ENCODE measurements at regions of chr1 and their contacts with region 1.

Region 1: GRCh38 chr1:67149179-67149770 is 14.5 kb upstream of the C1orf141 start:
- DNase-seq: peak; percentile 23
- ATAC-seq: peak; percentile 87
- H3K4me3 Mint-ChIP-seq: no peak overlapping the region
- H3K27ac Mint-ChIP-seq: no peak overlapping the region
- H3K4me1 Mint-ChIP-seq: peaks cover 9% of the 10 kb centered on the region
- H3K27me3 Mint-ChIP-seq: peaks cover 8% of the 10 kb centered on the region
- CTCF ChIP-seq: no peak

Region 2: GRCh38 chr1:66758241-66758755 is 391.0 kb before region 1 on chr1:
- CTCF ChIA-PET with region 1: interaction called, 19 read pairs
- POLR2A ChIA-PET with region 1: no interaction called
- intact Hi-C with region 1: no loop called
- DNase-seq: no peak
- ATAC-seq: peak; percentile 64
- H3K4me3 Mint-ChIP-seq: no peak overlapping the region
- H3K27ac Mint-ChIP-seq: no peak overlapping the region
- H3K4me1 Mint-ChIP-seq: peaks cover 9% of the 10 kb centered on the region
- H3K27me3 Mint-ChIP-seq: peaks cover 11% of the 10 kb centered on the region
- CTCF ChIP-seq: no peak

Region 3: DNA sequence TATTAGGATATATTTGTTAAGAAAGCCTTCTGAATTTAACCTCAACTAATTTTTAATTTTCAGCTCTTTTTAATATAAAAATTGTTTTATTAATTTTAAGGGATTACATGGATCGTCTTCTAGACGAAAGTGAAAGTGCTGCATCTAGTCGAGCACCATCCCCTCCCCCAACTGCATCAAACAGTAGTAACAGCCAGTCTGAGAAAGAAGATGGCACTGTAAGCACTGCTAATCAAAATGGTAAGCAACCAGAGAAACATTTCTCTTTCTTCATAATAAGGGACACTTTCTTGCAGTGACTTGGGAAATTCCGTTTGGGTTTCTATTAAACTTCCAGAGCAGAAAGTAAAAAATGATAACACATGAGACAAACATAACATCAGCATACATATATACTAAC is 167.6 kb before region 1 on chr1:
- CTCF ChIA-PET with region 1: interaction called, 13 read pairs
- POLR2A ChIA-PET with region 1: no interaction called
- intact Hi-C with region 1: no loop called
- DNase-seq: no peak
- ATAC-seq: peak; percentile 52
- H3K4me3 Mint-ChIP-seq: no peak overlapping the region
- H3K27ac Mint-ChIP-seq: peak overlapping the region; percentile 42
- H3K4me1 Mint-ChIP-seq: peaks cover 19% of the 10 kb centered on the region
- H3K27me3 Mint-ChIP-seq: no peaks in the 10 kb centered on the region
- CTCF ChIP-seq: no peak

Region 4: DNA sequence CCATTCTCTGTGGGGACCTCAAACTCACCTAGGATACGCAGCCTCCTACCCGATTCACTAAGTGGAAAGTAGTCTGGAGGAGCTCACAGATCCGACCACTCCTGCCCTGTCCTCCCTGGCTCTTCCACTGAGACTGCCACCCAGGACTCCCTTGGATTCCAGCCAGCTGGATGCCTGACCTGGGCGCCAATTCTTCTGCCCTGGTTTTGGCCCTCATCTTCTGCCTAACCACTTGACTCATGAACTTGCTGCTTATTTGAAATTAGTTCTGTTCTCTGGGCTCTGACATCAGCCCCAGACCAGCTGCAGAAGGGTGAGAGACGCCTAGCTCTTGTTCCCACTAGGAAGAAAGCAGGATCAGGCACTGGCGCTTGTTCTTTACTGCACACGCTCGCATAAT is 144.2 kb before region 1 on chr1:
- CTCF ChIA-PET with region 1: interaction called, 34 read pairs
- POLR2A ChIA-PET with region 1: no interaction called
- intact Hi-C with region 1: no loop called
- DNase-seq: no peak
- ATAC-seq: no peak
- H3K4me3 Mint-ChIP-seq: no peak overlapping the region
- H3K27ac Mint-ChIP-seq: no peak overlapping the region
- H3K4me1 Mint-ChIP-seq: peaks cover 5% of the 10 kb centered on the region
- H3K27me3 Mint-ChIP-seq: no peaks in the 10 kb centered on the region
- CTCF ChIP-seq: no peak

Region 5: DNA sequence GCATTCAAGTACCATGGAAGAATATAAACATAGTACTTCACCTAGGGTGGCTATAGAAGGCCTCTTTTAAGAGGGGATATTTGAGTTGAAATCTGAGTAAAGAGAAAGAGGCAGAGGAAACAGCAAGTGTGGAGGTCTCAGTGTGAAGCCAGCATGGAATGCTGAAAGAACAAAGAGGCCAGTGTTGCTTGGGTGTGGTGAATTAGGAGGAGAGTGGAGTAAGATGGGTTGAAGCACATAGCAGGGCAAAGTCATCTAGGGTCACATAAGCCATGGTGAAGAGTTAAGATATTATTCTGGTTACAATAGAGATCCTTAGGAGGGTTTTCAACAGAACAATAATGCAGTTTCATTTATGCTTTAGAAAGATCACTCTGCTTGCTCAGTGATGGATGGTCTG is 52.0 kb before region 1 on chr1:
- CTCF ChIA-PET with region 1: no interaction called
- POLR2A ChIA-PET with region 1: no interaction called
- intact Hi-C with region 1: no loop called
- DNase-seq: no peak
- ATAC-seq: no peak
- H3K4me3 Mint-ChIP-seq: no peak overlapping the region
- H3K27ac Mint-ChIP-seq: no peak overlapping the region
- H3K4me1 Mint-ChIP-seq: no peaks in the 10 kb centered on the region
- H3K27me3 Mint-ChIP-seq: no peaks in the 10 kb centered on the region
- CTCF ChIP-seq: no peak

Region 6: DNA sequence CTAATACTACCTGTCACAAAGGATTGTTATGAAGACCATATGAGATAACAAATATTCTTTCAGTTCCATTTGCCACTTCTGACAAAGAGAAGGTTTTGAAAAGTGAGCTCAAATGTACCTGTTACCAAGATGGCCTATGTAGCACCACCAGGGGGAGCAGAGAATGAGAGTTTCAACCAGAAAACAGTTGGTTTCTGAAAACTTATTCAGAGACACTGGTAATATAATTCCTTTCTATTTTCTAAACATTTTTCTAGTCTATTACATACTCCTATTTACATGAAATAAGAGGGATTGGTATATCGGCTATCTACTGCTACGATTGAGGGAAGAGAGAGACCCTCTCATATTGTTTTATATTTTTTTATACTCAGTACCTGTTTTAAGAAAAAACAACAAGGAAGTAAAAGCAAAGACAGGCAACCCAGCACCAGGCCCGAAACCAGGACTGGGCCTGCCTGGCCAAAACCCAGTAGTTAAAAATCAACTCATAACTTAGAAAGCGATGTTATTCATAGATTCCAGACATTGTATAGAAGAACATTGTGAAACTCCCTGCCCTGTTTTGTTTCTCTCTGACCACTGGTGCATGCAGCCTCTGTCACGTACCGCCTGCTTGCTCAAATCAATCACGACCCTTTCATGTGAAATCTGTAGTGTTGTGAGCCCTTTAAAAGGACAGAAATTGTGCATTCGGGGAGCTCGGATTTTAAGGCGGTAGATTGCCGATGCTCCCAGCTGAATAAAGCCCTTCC is 65.3 kb after region 1 on chr1:
- CTCF ChIA-PET with region 1: interaction called, 13 read pairs
- POLR2A ChIA-PET with region 1: no interaction called
- intact Hi-C with region 1: loop called (anchors 5 kb)
- DNase-seq: no peak
- ATAC-seq: peak; percentile 62
- H3K4me3 Mint-ChIP-seq: no peak overlapping the region
- H3K27ac Mint-ChIP-seq: no peak overlapping the region
- H3K4me1 Mint-ChIP-seq: peaks cover 9% of the 10 kb centered on the region
- H3K27me3 Mint-ChIP-seq: no peaks in the 10 kb centered on the region
- CTCF ChIP-seq: no peak

Region 7: GRCh38 chr1:67418839-67419586 is 269.7 kb after region 1 on chr1:
- CTCF ChIA-PET with region 1: no interaction called
- POLR2A ChIA-PET with region 1: no interaction called
- intact Hi-C with region 1: no loop called
- DNase-seq: no peak
- ATAC-seq: no peak
- H3K4me3 Mint-ChIP-seq: no peak overlapping the region
- H3K27ac Mint-ChIP-seq: no peak overlapping the region
- H3K4me1 Mint-ChIP-seq: peaks cover 5% of the 10 kb centered on the region
- H3K27me3 Mint-ChIP-seq: no peaks in the 10 kb centered on the region
- CTCF ChIP-seq: no peak

Measured in activated B cell treated with CpG ODN at 0.5 μM for 24 hours (primary cell).